Activated T-helper 2 cell treated with anti-CD3 and anti-CD28 coated beads, Interferon-gamma antibody, Interleukin-2, Interleukin-4, amounts not matched to agents 10 μg/mL and 5 μg/mL and 100 μg/mL, durations not matched to agents 14 hours and 24 hours and 36 hours (primary cell): ENCODE measurements at regions of chr12 and their contacts with region 1.

Region 1: GRCh38 chr12:54279866-54280467 is at the start of gene CBX5:
- DNase-seq: peak; percentile 100
- H3K4me3 Mint-ChIP-seq: no peak within 1 kb of the TSS
- H3K27ac Mint-ChIP-seq: no peak within 1 kb of the TSS
- H3K4me1 Mint-ChIP-seq: peaks cover 46% of the 10 kb centered on the region
- H3K27me3 Mint-ChIP-seq: no peaks in the 10 kb centered on the region
- total RNA-seq, gene CBX5: 98.1 and 100 TPM in 2 replicates

Region 2: GRCh38 chr12:54126696-54127537 is 153.1 kb before region 1 on chr12:
- intact Hi-C with region 1: no loop called
- DNase-seq: no peak
- H3K4me3 Mint-ChIP-seq: no peak overlapping the region
- H3K27ac Mint-ChIP-seq: no peak overlapping the region
- H3K4me1 Mint-ChIP-seq: no peaks in the 10 kb centered on the region
- H3K27me3 Mint-ChIP-seq: peaks cover 84% of the 10 kb centered on the region

Region 3: DNA sequence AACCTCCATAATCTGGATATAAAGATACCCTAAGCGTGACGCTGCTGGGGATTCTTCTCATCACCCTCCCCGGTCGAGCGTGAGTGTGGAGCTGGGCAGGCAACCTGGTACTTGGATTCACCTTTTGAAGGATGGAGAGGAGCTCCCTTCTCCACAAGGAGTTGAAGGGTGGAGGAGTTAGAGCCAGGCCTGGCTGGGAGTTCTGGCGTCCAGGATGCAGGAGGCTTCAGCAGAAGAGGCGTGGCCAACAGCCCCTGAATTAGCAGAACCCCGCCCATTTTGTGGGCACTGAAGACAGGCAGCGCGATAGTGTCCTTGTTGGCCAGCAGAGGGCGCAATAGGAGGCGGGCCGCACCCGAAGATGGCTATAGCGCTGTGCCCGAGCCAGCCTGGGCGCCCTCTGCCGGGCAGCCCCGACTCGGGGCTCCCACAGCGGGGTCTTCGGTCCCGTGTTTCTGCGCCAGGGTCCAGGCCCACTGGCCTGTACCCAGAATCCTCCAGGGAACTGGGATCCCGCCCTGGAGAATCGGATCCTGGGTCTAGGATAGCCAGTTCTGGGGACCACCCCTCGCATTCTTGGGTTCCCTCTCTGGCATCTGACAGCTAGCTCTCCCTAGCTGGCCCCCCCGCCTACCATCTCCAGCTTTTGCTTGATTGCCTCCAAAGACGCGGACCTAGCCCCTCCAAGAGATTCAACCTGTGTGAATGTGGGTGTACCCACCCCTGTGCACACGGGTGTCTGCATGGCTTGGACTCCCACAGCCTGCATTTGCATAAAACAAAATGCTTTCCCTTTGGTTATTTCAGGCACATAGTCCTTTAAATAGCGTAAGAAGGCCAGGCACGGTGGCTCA is 65.2 kb before region 1 on chr12:
- intact Hi-C with region 1: loop called (anchors 5 kb)
- DNase-seq: peak; percentile 86
- H3K4me3 Mint-ChIP-seq: peak overlapping the region; percentile 74
- H3K27ac Mint-ChIP-seq: no peak overlapping the region
- H3K4me1 Mint-ChIP-seq: peaks cover 16% of the 10 kb centered on the region
- H3K27me3 Mint-ChIP-seq: peaks cover 21% of the 10 kb centered on the region

Region 4: DNA sequence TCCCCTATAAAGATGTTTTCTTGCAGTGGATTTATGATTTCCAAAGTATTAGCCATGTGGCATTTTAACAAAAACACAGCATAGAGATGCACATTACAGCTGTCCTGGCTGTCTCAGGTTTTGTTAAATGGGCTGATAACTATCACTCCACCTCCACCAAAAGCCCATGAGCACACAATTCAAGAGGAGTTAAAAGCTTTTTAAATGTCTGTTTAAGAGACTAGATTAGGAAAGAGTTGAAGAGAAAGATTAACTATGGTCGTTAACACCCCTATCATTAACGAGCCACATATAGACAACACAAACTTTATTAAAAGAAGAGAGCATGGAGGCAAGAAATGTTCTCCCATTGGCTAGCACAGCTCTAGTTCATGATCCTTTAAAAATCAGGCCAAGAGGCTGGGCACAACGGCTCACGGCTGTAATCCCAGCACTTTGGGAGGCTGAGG is 14.6 kb before region 1 on chr12:
- intact Hi-C with region 1: loop called (anchors 2 kb)
- DNase-seq: no peak
- H3K4me3 Mint-ChIP-seq: no peak overlapping the region
- H3K27ac Mint-ChIP-seq: no peak overlapping the region
- H3K4me1 Mint-ChIP-seq: peaks cover 31% of the 10 kb centered on the region
- H3K27me3 Mint-ChIP-seq: no peaks in the 10 kb centered on the region

Region 5: GRCh38 chr12:54324617-54325441 is 44.9 kb after region 1 on chr12 and contains the start of gene COPZ1:
- intact Hi-C with region 1: loop called (anchors 1 kb)
- DNase-seq: peak; percentile 92
- H3K4me3 Mint-ChIP-seq: peak within 1 kb of the TSS; percentile 100
- H3K27ac Mint-ChIP-seq: peak within 1 kb of the TSS; percentile 97
- H3K4me1 Mint-ChIP-seq: peaks cover 21% of the 10 kb centered on the region
- H3K27me3 Mint-ChIP-seq: no peaks in the 10 kb centered on the region
- total RNA-seq, gene COPZ1: 108 and 109 TPM in 2 replicates

Region 6: DNA sequence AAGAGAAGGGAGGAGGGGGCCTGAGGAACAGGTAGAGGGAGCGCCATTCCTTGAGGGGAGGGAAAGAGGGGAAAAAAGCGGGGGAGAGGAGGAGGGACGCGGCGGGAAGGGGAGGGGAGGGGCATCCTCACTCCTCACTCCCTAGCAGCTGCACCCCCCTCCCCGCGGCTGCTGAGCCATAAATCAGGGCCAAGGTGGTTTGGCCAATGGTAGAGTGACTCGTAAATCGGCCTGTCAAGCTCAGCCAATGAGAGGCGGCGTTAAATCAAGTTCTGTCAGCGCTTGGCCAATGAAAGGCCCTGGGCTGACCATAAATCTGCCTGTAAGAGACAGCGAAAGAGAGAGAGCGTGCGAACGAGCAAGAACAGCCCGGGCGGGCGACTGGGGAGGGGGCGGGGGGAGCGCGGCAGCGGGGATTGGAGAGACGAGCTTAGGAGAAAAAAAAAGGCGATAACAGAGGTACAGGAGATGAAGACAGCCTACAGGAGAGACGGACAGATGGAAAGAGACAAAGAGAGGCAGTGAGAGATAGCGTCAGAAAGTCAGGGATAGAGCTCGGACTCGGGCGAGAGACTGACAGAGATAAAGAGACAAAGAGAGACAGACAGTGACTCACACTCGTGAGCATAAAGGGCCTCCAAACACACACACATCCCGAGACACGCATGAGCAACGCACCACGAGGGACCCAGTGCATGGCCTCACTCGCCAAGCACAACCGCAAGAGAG is 79.2 kb after region 1 on chr12:
- intact Hi-C with region 1: loop called (anchors 1 kb)
- DNase-seq: peak; percentile 94
- H3K4me3 Mint-ChIP-seq: no peak overlapping the region
- H3K27ac Mint-ChIP-seq: no peak overlapping the region
- H3K4me1 Mint-ChIP-seq: peaks cover 25% of the 10 kb centered on the region
- H3K27me3 Mint-ChIP-seq: no peaks in the 10 kb centered on the region

Region 7: GRCh38 chr12:54370208-54370730 is 90.3 kb after region 1 on chr12:
- intact Hi-C with region 1: no loop called
- DNase-seq: no peak
- H3K4me3 Mint-ChIP-seq: peak overlapping the region; percentile 9
- H3K27ac Mint-ChIP-seq: no peak overlapping the region
- H3K4me1 Mint-ChIP-seq: peaks cover 20% of the 10 kb centered on the region
- H3K27me3 Mint-ChIP-seq: no peaks in the 10 kb centered on the region

Region 8: GRCh38 chr12:54497883-54498282 is 217.9 kb after region 1 on chr12:
- intact Hi-C with region 1: loop called (anchors 5 kb)
- DNase-seq: no peak
- H3K4me3 Mint-ChIP-seq: peak overlapping the region; percentile 96
- H3K27ac Mint-ChIP-seq: peak overlapping the region; percentile 92
- H3K4me1 Mint-ChIP-seq: peaks cover 38% of the 10 kb centered on the region
- H3K27me3 Mint-ChIP-seq: no peaks in the 10 kb centered on the region